AG04449 (cell line): ENCODE measurements at regions of chr1 and their contacts with region 1.

Region 1: GRCh38 chr1:201559679-201560162 is 20.8 kb downstream of the NAV1 start:
- DNase-seq: no peak
- H3K4me3 ChIP-seq: no peak overlapping the region
- CTCF ChIP-seq: peak; percentile 96

Region 2: GRCh38 chr1:201538612-201539551 is 20.8 kb before region 1 on chr1 and contains the start of gene NAV1:
- CTCF ChIA-PET with region 1: interaction called, 39 read pairs
- POLR2A ChIA-PET with region 1: interaction called, 5 read pairs
- DNase-seq: no peak
- H3K4me3 ChIP-seq: peak within 1 kb of the TSS; percentile 92
- CTCF ChIP-seq: no peak

Region 3: GRCh38 chr1:201593200-201593921 is 33.6 kb after region 1 on chr1:
- CTCF ChIA-PET with region 1: interaction called, 15 read pairs
- POLR2A ChIA-PET with region 1: interaction called, 9 read pairs
- DNase-seq: peak; percentile 97
- H3K4me3 ChIP-seq: no peak overlapping the region
- CTCF ChIP-seq: no peak

Region 4: GRCh38 chr1:201634261-201634660 is 74.5 kb after region 1 on chr1:
- CTCF ChIA-PET with region 1: interaction called, 49 read pairs
- POLR2A ChIA-PET with region 1: interaction called, 3 read pairs
- DNase-seq: no peak
- H3K4me3 ChIP-seq: no peak overlapping the region
- CTCF ChIP-seq: no peak

Region 5: DNA sequence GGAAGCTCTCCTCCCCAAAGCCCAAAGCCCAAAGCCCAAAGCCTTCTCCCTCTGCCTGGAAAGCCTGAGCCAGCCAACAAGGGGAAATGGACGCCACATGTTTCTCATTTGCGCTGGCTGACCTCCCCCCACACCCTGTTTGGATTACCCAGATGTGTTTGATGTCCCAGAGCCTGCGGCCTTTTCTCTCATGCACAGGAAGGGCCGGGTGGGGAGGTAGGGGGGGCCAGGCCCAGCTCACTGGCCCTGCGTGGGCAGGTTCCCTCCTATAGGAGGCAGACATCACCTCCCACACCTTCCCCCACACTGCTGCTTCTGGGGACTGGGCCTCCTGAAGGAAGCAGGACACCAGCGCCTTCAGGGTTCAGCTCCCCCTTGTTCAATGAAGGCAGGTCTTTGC is 95.5 kb after region 1 on chr1:
- CTCF ChIA-PET with region 1: interaction called, 105 read pairs
- POLR2A ChIA-PET with region 1: interaction called, 5 read pairs
- DNase-seq: no peak
- H3K4me3 ChIP-seq: no peak overlapping the region
- CTCF ChIP-seq: peak; percentile 24

Region 6: DNA sequence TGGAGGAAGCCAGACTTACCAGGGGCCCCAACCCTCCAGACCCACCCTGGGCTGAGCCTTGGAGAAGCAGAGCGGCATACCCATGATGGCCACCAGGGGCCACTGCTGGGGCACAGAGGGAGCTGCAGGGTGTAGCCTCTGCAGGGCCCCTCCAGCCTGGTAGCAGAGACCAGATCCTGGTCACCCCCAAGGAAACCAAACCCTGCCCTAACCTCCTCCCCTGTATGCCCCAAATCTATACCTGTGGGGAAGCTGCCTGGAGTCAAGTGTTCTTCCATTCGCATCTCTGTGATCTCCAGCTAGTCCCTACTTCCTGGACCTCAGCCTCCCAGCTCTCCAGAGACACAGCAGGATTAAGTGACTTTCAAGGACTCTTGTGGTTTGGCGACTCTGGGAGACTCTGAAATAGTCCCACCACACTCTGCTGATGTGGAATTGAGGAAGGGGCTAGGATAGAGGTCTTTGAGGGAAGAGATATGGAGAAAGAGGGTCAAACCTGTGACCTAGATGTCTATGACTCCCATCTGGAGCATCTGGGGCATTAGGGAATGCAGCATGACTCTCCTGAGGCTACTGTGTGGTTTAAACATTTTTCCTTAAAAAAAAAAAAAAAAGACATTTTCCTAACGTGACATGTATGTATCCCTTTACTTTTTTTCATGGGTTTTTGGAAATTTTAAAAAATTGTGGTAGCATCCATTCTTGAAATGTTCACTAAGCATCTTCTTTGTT is 150.0 kb after region 1 on chr1:
- CTCF ChIA-PET with region 1: interaction called, 421 read pairs
- POLR2A ChIA-PET with region 1: interaction called, 4 read pairs
- DNase-seq: no peak
- H3K4me3 ChIP-seq: no peak overlapping the region
- CTCF ChIP-seq: peak; percentile 92